H1 (cell line): ENCODE measurements at regions of chr4 and their contacts with region 1.

Region 1: DNA sequence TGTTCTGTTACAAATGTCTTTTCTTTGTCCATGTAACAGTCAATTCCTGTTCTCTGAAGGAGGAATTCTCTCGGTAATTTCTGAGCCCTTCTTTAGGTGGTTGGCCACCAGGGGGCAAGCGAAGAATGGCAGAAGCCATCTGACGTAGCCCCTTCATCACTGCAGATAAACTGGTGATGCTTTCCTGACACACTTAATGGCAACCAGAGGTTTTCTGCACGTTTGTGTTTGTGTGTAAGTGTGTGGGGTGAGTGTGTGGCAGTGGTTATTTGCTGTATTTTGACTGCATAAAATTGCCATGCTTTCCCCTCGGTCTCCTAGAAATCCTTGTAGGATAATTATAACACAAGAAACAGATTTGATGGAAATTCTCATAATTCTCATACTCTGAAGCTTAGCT is 64.8 kb upstream of the STOX2 start:
- DNase-seq: peak in 1 of 2 experiments; percentile 86
- H3K4me3 ChIP-seq: no peak overlapping the region
- H3K27ac ChIP-seq: no peak overlapping the region
- H3K4me1 ChIP-seq: peaks cover 0 to 2% (median 0%) of the 10 kb centered on the region in 4 experiments; a peak in 1 of 7 replicates
- H3K27me3 ChIP-seq: no peaks in the 10 kb centered on the region
- CTCF ChIP-seq: peak; percentile 57 to 87 (median 87)
- EP300 ChIP-seq: no peak
- POLR2A ChIP-seq: no peak
- RAD21 ChIP-seq: peak; percentile 97 to 99

Region 2: DNA sequence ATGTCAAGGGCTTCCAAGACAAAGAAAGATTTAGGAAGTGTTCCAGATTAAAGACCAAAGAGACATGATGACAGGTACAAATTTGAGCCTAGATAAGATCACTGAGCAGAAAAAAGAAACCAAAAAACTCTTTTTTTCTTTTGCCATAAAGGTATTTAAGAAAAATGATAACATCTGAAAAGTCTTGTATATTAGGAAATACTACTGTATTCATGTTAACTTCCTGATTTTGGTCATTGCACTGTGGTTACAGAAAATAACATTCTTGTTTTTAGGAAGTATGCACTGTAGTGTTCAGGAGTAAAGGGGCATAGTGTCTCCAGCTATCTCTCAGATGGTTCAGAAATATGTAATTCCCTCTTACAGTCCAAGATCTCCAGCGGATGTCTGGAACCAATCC is 218.4 kb before region 1 on chr4:
- CTCF ChIA-PET with region 1: no interaction called
- POLR2A ChIA-PET with region 1: no interaction called
- DNase-seq: no peak
- H3K4me3 ChIP-seq: no peak overlapping the region
- H3K27ac ChIP-seq: no peak overlapping the region
- H3K4me1 ChIP-seq: no peaks in the 10 kb centered on the region
- H3K27me3 ChIP-seq: no peaks in the 10 kb centered on the region
- CTCF ChIP-seq: no peak
- EP300 ChIP-seq: no peak
- POLR2A ChIP-seq: no peak
- RAD21 ChIP-seq: no peak

Region 3: DNA sequence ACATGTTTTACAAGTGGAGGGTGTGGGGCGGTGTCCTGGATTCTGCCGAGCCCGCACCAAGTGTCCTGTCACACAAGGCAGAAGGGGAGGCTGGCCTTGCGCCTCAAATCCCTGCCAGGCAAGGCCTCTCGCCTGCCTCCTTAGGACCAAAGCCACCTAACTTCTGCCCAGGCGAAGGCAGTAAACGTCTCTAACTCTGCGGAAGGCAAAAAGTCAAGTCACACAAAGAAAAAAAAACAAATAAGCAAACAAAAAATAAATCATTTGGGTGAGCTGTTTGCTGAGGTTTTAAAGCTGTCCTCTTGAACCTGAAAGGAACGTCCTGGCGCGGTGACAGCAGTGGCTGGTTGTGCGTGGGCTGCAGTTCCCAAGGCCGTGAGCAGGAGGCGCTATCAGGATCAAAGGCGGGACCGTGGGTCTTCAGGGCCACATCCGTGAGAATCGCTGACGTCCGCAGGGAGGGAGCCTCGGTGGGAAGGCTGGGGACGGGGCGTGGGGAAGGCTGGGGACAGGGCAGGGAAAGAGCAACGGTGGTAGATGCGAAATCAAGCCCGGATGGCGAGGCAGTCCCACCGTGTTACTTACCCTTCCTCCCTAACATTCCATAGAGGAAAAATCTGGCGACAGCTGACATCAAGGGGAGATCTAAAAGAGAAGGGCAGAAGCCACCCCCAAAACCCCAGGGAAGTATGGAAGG is 82.1 kb before region 1 on chr4:
- CTCF ChIA-PET with region 1: no interaction called
- POLR2A ChIA-PET with region 1: no interaction called
- DNase-seq: peak in 1 of 2 experiments; percentile 80
- H3K4me3 ChIP-seq: peak overlapping the region; percentile 20 to 57 (median 35); a peak in 6 of 8 replicates
- H3K27ac ChIP-seq: no peak overlapping the region
- H3K4me1 ChIP-seq: peaks cover 0 to 4% (median 2%) of the 10 kb centered on the region in 4 experiments; a peak in 2 of 7 replicates
- H3K27me3 ChIP-seq: no peaks in the 10 kb centered on the region
- CTCF ChIP-seq: peak; percentile 49 to 94 (median 92)
- EP300 ChIP-seq: no peak
- POLR2A ChIP-seq: no peak
- RAD21 ChIP-seq: peak; percentile 35 to 52

Region 4: DNA sequence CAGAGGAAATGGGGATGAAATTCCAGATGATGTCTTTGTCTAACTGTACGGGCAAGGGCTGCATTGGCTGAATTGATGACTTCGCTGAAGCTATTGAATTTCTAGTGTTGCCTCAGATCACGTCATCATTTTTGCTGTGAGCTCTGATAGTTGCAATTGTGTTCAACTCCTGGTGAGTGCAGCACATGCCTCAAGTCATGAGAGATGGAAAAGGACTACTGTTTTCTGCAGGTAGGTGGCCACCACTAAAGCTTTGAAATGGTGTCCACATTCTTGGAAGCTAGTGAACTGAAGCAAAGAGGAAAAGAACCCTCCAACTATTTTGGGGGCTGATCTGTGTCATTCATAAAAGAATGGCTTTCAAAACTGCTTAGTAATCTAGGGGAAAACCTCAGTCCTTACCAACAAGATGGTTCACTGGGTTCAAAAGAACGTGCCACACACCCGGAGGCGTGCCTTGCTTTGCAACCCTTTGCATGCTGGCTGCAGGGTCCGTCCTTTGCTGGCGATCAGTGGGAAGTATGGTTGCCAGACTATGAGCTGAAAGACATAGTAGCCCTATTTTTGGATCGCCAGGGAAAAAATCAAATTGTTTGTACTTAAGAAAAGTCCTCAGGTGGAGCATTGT is 23.3 kb before region 1 on chr4:
- CTCF ChIA-PET with region 1: no interaction called
- POLR2A ChIA-PET with region 1: no interaction called
- DNase-seq: no peak
- H3K4me3 ChIP-seq: no peak overlapping the region
- H3K27ac ChIP-seq: no peak overlapping the region
- H3K4me1 ChIP-seq: no peaks in the 10 kb centered on the region
- H3K27me3 ChIP-seq: no peaks in the 10 kb centered on the region
- CTCF ChIP-seq: no peak
- EP300 ChIP-seq: no peak
- POLR2A ChIP-seq: no peak
- RAD21 ChIP-seq: no peak

Region 5: GRCh38 chr4:183888564-183888963 is 48.3 kb after region 1 on chr4:
- CTCF ChIA-PET with region 1: no interaction called
- POLR2A ChIA-PET with region 1: no interaction called
- DNase-seq: no peak
- H3K4me3 ChIP-seq: no peak overlapping the region
- H3K27ac ChIP-seq: no peak overlapping the region
- H3K4me1 ChIP-seq: no peaks in the 10 kb centered on the region
- H3K27me3 ChIP-seq: no peaks in the 10 kb centered on the region
- CTCF ChIP-seq: no peak
- EP300 ChIP-seq: no peak
- POLR2A ChIP-seq: no peak
- RAD21 ChIP-seq: no peak

Region 6: GRCh38 chr4:184168406-184169019 is 328.2 kb after region 1 on chr4:
- CTCF ChIA-PET with region 1: interaction called, 44 read pairs
- POLR2A ChIA-PET with region 1: no interaction called
- DNase-seq: peak; percentile 77 to 92
- H3K4me3 ChIP-seq: peak overlapping the region in 1 of 4 experiments; percentile 41; a peak in 2 of 8 replicates
- H3K27ac ChIP-seq: no peak overlapping the region
- H3K4me1 ChIP-seq: peaks cover 12 to 28% (median 17%) of the 10 kb centered on the region in 4 experiments
- H3K27me3 ChIP-seq: no peaks in the 10 kb centered on the region; a peak in 2 of 7 replicates
- CTCF ChIP-seq: peak; percentile 91 to 96 (median 92)
- EP300 ChIP-seq: 0 out of 3 replicates have a peak, but pooled peaks of 1 of the 2 experiments have one; percentile 33
- POLR2A ChIP-seq: no peak
- RAD21 ChIP-seq: peak; percentile 78 to 86